PC-9 (cell line): ENCODE measurements at regions of chr6 and their contacts with region 1.

Region 1: DNA sequence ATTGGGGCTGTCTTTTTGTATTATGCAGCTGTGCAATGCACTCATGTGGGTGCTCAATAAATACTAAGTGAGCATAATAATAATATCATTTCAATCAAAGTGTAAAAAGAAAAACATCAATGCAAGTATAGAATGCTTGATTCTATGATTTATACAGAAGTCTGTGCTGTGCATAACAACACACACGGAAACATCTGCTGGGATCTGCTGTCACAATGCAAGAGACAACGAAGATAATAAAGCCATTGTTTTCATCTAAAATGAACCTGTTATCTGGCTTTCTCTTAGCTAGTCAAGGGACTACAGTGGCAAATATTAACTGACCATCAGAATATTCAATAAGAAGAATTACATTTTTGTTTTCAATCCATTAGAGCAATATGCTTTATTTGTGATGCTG is 1156.9 kb upstream of the MAP3K7 start:
- DNase-seq: no peak
- H3K4me3 ChIP-seq: no peak overlapping the region
- H3K27ac ChIP-seq: no peak overlapping the region
- H3K4me1 ChIP-seq: no peaks in the 10 kb centered on the region
- H3K27me3 ChIP-seq: no peaks in the 10 kb centered on the region
- CTCF ChIP-seq: no peak

Region 2: GRCh38 chr6:91330896-91331295 is 412.9 kb before region 1 on chr6:
- CTCF ChIA-PET with region 1: no interaction called
- POLR2A ChIA-PET with region 1: no interaction called
- intact Hi-C with region 1: loop called (anchors 1 kb)
- DNase-seq: no peak
- H3K4me3 ChIP-seq: no peak overlapping the region
- H3K27ac ChIP-seq: no peak overlapping the region
- H3K4me1 ChIP-seq: no peaks in the 10 kb centered on the region
- H3K27me3 ChIP-seq: no peaks in the 10 kb centered on the region
- CTCF ChIP-seq: no peak

Region 3: DNA sequence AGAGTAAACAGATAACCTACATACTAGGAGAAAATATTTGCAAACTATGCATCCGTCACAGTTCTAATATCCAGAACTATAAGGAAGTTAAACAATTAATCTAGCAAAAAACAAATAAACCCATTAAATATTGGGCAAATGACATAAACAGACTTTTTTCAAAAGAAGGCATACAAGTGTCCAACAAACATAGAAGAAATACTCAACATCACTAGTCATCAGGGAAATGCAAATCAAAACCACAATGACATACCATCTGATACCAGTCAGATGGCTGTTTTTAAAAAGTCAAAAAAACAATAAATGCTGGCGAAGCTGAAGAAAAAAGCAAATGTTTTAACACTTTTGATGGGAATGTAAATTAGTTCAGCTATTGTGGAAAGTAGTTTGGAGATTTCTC is 39.2 kb before region 1 on chr6:
- CTCF ChIA-PET with region 1: no interaction called
- POLR2A ChIA-PET with region 1: no interaction called
- intact Hi-C with region 1: loop called (anchors 5 kb)
- DNase-seq: peak in 1 of 2 experiments; percentile 81
- H3K4me3 ChIP-seq: no peak overlapping the region
- H3K27ac ChIP-seq: no peak overlapping the region
- H3K4me1 ChIP-seq: peaks cover 18% of the 10 kb centered on the region
- H3K27me3 ChIP-seq: no peaks in the 10 kb centered on the region
- CTCF ChIP-seq: no peak